Ascending aorta (tissue), 2 donors: ENCODE measurements at regions of chr17 and their contacts with region 1.

Region 1: GRCh38 chr17:9162275-9162985 is 141.1 kb downstream of the NTN1 start:
- DNase-seq: peak; percentile 40 to 94
- H3K4me3 ChIP-seq: peak overlapping the region; percentile 15 to 47
- H3K27ac ChIP-seq: peak overlapping the region; percentile 85 to 86
- H3K4me1 ChIP-seq: peaks cover 6 to 29% of the 10 kb centered on the region in 2 donors
- H3K27me3 ChIP-seq: no peaks in the 10 kb centered on the region
- CTCF ChIP-seq: peak; percentile 56 to 69 (median 66)

Region 2: DNA sequence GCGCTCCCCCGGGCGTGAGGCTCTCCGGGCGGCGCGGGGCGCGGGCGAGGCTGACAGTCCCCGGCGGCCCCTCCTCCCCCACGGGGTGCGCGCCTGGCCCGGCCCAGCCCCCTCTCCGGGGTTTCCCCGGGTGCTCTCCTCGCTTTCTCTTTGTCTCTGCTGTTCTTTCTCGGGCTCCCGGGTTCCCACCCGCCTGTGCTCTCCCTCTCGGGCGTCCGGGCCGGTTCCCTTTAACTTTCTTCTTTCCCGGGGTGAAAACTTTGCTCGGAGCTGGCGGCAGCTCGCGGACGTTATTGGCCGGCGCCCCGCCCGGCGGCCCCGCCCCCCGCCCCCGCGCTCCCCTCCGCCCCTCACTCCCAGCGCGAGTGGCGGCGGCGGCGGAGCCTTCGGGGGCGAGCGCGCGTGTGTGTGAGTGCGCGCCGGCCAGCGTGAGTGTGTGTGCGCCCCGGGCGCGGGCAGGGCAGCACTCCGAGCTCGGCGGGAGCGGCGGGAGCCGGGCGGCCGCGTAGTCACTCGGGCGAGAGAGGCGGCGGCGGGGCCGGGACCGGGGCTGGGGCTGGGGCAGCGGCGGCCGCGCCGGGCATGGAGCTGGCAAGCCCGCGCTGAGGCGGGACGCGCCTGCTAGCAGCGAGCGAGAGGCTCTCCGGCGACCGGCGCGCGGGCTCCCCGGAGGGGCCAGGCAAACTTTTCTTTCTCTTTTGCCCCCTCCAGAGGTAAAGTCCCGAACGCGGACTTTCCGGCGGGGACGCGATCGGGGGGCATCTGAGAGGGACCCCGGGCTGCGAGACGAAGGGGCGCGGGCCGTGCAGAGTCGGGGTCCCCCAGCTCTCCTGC is 141.1 kb before region 1 on chr17 and contains the start of gene NTN1:
- intact Hi-C with region 1: loop called (anchors 2 kb)
- DNase-seq: peak in 1 of 2 donors; percentile 77
- H3K4me3 ChIP-seq: peak within 1 kb of the TSS; percentile 72 to 84
- H3K27ac ChIP-seq: peak within 1 kb of the TSS; percentile 75
- H3K4me1 ChIP-seq: peaks cover 7 to 10% of the 10 kb centered on the region in 2 donors
- H3K27me3 ChIP-seq: no peaks in the 10 kb centered on the region
- CTCF ChIP-seq: no peak
- total RNA-seq, gene NTN1: 29.6 TPM

Region 3: GRCh38 chr17:9123594-9124553 is 38.6 kb before region 1 on chr17:
- intact Hi-C with region 1: loop called (anchors 2 kb)
- DNase-seq: peak in 1 of 2 donors; percentile 69
- H3K4me3 ChIP-seq: peak overlapping the region in 1 of 2 donors; percentile 26
- H3K27ac ChIP-seq: peak overlapping the region; percentile 46 to 74
- H3K4me1 ChIP-seq: peaks cover 0 to 13% of the 10 kb centered on the region in 2 donors
- H3K27me3 ChIP-seq: no peaks in the 10 kb centered on the region
- CTCF ChIP-seq: no peak

Region 4: DNA sequence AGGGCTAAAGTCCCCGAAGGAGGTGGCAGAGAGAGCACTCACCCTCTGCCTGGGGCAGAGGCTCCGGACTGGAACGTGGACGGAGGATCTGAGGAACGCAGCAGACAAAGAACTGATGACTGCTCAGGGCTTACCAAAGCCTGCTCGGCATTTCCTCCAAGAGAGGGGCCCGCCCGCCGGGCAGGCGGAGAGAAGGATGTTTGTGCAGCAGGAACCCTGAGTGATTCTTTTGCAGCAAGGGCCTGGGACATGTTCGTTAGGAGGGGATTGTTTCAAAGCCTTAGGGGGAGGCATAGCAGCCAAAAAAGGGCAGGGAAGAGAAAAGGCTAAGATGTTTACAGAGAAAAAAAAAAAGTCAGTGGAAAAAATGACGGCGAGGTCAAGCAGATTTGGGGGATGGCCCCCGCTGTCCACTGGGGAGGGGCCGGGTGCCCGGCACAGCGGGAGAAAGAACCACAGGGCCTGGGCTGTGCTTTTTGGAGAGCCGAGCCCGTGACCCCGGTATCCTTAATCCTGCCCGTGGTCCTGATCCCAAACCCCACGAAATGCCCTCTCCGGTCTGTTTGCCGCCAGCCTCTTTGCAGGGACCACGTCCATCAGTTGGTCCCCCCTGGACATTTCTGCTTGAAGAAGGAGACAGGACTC is 11.9 kb before region 1 on chr17:
- intact Hi-C with region 1: loop called (anchors 1 kb)
- DNase-seq: no peak
- H3K4me3 ChIP-seq: peak overlapping the region in 1 of 2 donors; percentile 7
- H3K27ac ChIP-seq: peak overlapping the region; percentile 64 to 75
- H3K4me1 ChIP-seq: peaks cover 5 to 28% of the 10 kb centered on the region in 2 donors
- H3K27me3 ChIP-seq: no peaks in the 10 kb centered on the region
- CTCF ChIP-seq: no peak

Region 5: GRCh38 chr17:9239793-9240658 is 77.6 kb after region 1 on chr17:
- intact Hi-C with region 1: loop called (anchors 2 kb)
- DNase-seq: peak; percentile 59 to 91
- H3K4me3 ChIP-seq: peak overlapping the region; percentile 65 to 69
- H3K27ac ChIP-seq: peak overlapping the region; percentile 99 to 100
- H3K4me1 ChIP-seq: peaks cover 21 to 60% of the 10 kb centered on the region in 2 donors
- H3K27me3 ChIP-seq: no peaks in the 10 kb centered on the region
- CTCF ChIP-seq: no peak

Region 6: DNA sequence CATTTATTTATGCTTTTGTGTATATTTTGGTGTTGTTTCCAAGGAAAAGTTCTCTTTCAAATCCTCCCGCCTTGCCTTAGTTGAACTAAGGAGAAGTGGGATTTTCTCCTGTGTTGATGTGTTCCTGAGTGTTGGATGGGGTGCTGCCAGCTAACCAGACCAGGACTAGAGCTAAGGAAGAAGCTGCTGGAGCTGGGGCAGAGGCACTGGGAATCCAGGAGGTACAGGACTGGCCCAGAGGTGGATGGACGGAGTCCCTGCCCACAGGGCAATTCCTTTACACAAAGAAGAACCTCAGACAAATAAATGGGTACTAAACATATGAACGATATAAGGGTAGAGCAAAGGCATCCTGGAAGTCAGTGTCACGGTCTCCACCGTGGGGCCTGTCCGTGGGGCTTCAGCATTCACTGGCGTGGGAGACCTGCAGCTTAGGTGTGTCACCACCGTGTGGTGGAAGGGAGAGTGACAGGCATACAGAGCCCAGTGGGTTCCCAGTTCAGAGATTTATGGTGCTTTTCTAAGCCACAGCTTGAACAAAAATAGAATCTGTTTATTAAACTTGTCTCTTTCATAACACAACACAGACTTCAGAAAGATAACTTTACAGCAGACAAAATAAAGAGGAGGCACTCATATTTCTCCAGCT is 129.6 kb after region 1 on chr17:
- intact Hi-C with region 1: loop called (anchors 5 kb)
- DNase-seq: peak in 1 of 2 donors; percentile 72
- H3K4me3 ChIP-seq: no peak overlapping the region
- H3K27ac ChIP-seq: peak overlapping the region; percentile 80 to 83
- H3K4me1 ChIP-seq: peaks cover 3 to 15% of the 10 kb centered on the region in 2 donors
- H3K27me3 ChIP-seq: no peaks in the 10 kb centered on the region
- CTCF ChIP-seq: peak; percentile 74 to 77 (median 75)